CD8-positive, alpha-beta T cell (primary cell): ENCODE measurements at regions of chr1 and their contacts with region 1.

Region 1: DNA sequence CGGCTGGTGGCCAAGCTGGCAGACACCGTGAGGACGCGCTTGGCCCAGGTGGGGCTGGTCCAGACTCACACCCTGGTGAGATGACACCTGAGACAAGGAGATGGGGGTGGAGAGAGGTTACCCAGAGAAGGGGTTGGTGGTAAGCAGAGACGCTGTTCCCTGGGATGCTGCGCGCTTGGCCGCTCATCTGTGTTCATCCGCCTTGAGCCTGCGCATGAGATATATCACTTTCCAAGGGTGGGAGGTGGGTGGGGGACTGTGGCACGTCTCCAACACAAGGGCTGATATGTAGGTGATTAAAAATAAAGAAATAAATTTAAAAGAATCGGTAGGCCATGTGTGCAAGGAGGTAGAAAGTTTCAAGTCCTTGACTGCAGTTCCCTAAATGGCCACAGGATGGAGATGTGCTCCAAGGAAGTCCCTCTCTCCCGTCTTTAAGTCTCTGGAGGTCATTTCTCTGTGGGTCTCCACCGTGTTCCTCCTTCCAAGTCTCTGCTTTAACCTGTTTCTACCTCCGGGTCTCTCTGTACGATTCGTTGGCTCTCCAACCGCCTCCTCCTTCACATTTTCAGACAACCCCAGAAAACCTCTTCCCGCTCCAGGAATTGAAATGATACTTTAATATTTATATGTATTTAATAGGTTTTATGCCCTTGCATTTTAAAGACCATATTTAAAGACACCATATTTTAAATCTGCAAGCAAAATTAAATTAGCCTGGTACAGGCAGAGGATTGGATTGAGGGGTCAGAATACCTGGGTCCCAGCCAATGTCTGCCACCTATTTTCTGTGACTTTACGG is 4.5 kb downstream of the TTC24 start:
- DNase-seq: peak; percentile 52 to 89 (median 78)
- ATAC-seq: peak; percentile 53
- H3K4me3 ChIP-seq: peak overlapping the region in 1 of 2 experiments; percentile 8
- H3K4me3 Mint-ChIP-seq: peak overlapping the region; percentile 61
- H3K27ac ChIP-seq: peak overlapping the region in 1 of 2 experiments; percentile 85
- H3K27ac Mint-ChIP-seq: peak overlapping the region; percentile 81
- H3K4me1 ChIP-seq: peaks cover 28% of the 10 kb centered on the region
- H3K4me1 Mint-ChIP-seq: peaks cover 38% of the 10 kb centered on the region
- H3K27me3 ChIP-seq: no peaks in the 10 kb centered on the region
- H3K27me3 Mint-ChIP-seq: no peaks in the 10 kb centered on the region
- CTCF ChIP-seq: peak; percentile 80

Region 2: GRCh38 chr1:155893389-155894142 is 690.5 kb before region 1 on chr1:
- CTCF ChIA-PET with region 1: no interaction called
- POLR2A ChIA-PET with region 1: no interaction called
- intact Hi-C with region 1: no loop called
- DNase-seq: peak in 5 of 9 experiments; percentile 16 to 69 (median 35)
- ATAC-seq: peak; percentile 95
- H3K4me3 ChIP-seq: no peak overlapping the region
- H3K4me3 Mint-ChIP-seq: no peak overlapping the region
- H3K27ac ChIP-seq: peak overlapping the region in 1 of 2 experiments; percentile 51
- H3K27ac Mint-ChIP-seq: peak overlapping the region; percentile 86
- H3K4me1 ChIP-seq: peaks cover 13% of the 10 kb centered on the region
- H3K4me1 Mint-ChIP-seq: peaks cover 15% of the 10 kb centered on the region
- H3K27me3 ChIP-seq: no peaks in the 10 kb centered on the region
- H3K27me3 Mint-ChIP-seq: no peaks in the 10 kb centered on the region
- CTCF ChIP-seq: no peak

Region 3: DNA sequence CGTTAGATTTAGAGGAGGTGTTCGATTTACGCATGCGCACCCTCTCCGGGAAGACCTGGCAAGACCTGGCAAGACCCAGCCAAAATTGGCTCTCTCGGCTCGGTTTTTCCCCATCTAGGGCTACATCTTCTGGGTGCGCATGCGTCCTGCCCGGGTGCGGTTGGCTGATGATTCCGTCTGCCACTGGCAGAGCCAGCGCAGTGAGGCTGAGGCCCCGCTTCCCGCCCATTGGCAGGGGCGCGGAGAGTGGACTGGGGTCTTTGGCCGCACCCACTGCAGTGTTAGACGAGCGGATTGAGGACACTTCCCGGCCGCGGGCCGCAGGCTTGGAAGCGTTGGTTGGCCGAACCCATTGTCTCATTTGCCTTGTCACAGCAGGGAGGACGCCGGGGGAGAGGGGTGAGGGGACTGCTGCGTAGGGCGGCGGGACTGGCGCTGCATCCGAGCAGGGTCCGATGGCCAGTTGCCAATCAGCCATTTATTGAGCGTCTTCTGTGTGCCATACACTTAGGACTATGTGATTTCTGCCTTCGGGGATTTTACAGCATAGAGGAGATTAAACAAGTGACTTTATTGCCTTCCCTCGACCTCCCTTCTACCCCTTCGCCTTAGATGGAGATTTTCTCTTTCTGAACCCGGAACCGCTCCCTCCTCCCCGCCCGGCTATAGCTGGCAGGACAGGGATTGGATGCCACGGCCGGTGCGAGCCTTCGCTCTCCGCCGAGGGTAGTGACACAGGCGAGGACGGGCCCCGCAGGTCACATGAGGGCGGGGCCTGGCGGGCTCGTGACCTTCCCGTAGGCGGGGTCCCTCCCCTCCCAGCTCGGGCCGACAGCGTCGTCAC is 127.2 kb before region 1 on chr1:
- CTCF ChIA-PET with region 1: interaction called, 5 read pairs
- POLR2A ChIA-PET with region 1: interaction called, 3 read pairs
- intact Hi-C with region 1: loop called (anchors 1 kb)
- DNase-seq: peak; percentile 92 to 99 (median 96)
- ATAC-seq: peak; percentile 84
- H3K4me3 ChIP-seq: peak overlapping the region; percentile 57 to 62
- H3K4me3 Mint-ChIP-seq: peak overlapping the region; percentile 93
- H3K27ac ChIP-seq: peak overlapping the region; percentile 83 to 89
- H3K27ac Mint-ChIP-seq: peak overlapping the region; percentile 100
- H3K4me1 ChIP-seq: peaks cover 4% of the 10 kb centered on the region
- H3K4me1 Mint-ChIP-seq: peaks cover 17% of the 10 kb centered on the region
- H3K27me3 ChIP-seq: no peaks in the 10 kb centered on the region
- H3K27me3 Mint-ChIP-seq: no peaks in the 10 kb centered on the region
- CTCF ChIP-seq: no peak

Region 4: GRCh38 chr1:156524481-156524869 is 59.5 kb before region 1 on chr1:
- CTCF ChIA-PET with region 1: interaction called, 3 read pairs
- POLR2A ChIA-PET with region 1: interaction called, 10 read pairs
- intact Hi-C with region 1: no loop called
- DNase-seq: peak in 3 of 9 experiments; percentile 49 to 76 (median 59)
- ATAC-seq: peak; percentile 69
- H3K4me3 ChIP-seq: no peak overlapping the region
- H3K4me3 Mint-ChIP-seq: peak overlapping the region; percentile 40
- H3K27ac ChIP-seq: peak overlapping the region in 1 of 2 experiments; percentile 59
- H3K27ac Mint-ChIP-seq: peak overlapping the region; percentile 63
- H3K4me1 ChIP-seq: peaks cover 41% of the 10 kb centered on the region
- H3K4me1 Mint-ChIP-seq: peaks cover 44% of the 10 kb centered on the region
- H3K27me3 ChIP-seq: no peaks in the 10 kb centered on the region
- H3K27me3 Mint-ChIP-seq: no peaks in the 10 kb centered on the region
- CTCF ChIP-seq: no peak

Region 5: DNA sequence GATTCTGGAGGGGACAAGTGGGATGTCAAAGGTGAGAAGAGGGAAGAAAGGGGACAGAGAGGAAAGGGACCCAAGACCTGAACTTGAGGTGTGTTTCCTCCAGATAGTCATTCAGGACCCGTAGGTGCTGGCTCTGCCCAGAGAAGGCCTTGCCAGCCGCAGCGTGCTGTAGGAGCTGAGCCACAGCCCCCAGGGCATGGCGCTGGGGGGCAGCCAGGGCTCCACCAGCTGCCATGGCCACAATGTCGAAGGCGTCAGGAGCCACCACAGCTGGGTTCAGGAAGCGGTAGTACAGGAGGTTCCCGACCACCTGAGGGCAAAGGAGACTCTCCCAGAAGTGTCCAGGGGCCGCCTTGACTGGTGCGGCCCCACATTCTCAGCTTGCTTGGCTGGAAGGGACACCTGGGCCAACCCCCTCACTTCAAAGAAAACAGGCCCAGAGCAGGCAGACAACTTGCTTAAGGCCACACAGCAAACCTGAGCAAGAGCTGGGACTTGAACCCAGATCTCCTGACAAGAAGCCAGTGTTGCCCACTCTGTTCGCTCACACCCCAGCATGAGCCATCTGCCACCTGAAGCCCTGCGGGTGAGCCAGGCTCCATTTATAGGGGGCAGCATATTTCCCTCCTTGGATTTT is 49.5 kb before region 1 on chr1:
- CTCF ChIA-PET with region 1: no interaction called
- POLR2A ChIA-PET with region 1: no interaction called
- intact Hi-C with region 1: no loop called
- DNase-seq: no peak
- ATAC-seq: no peak
- H3K4me3 ChIP-seq: no peak overlapping the region
- H3K4me3 Mint-ChIP-seq: no peak overlapping the region
- H3K27ac ChIP-seq: no peak overlapping the region
- H3K27ac Mint-ChIP-seq: no peak overlapping the region
- H3K4me1 ChIP-seq: no peaks in the 10 kb centered on the region
- H3K4me1 Mint-ChIP-seq: no peaks in the 10 kb centered on the region
- H3K27me3 ChIP-seq: no peaks in the 10 kb centered on the region
- H3K27me3 Mint-ChIP-seq: no peaks in the 10 kb centered on the region
- CTCF ChIP-seq: no peak

Region 6: DNA sequence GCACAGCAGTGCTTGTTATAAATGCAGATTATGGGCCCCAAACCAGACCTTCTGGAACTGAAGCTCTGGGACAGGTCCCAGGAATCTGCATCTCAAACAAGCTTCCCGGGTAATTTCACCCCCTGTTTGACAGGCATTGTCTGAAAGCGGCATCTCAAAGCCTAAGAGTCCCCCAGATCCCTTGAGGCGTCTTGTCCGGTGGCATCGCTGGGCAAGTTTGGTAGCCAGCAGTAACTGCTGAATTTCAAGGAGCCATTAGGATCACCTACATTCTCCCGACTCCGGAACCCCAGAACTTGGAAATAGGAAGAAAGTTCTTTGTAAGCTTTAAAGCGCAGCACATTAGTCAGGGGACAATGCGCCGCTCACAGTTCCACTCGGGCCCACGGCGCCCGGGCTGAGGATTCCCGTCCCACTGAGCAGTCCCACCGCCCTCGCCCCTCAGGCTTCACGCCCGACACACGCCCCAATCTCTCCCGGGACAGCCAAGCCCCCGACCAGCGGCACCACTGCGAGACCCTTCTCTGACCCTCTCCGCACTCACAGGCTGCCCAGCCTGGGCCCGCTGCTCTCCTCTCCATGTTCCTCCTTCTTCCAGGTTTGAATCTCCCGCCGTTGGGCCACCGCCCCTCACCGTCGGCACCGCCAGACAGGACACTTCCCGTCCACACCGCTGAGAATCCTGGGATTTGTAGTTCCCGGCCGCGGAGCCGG is 11.9 kb before region 1 on chr1 and contains the start of gene IQGAP3:
- CTCF ChIA-PET with region 1: interaction called, 4 read pairs
- POLR2A ChIA-PET with region 1: interaction called, 5 read pairs
- intact Hi-C with region 1: loop called in 1 of 2 experiments (anchors 1 kb)
- DNase-seq: peak; percentile 49 to 83 (median 72)
- ATAC-seq: peak; percentile 94
- H3K4me3 ChIP-seq: peak within 1 kb of the TSS; percentile 26 to 39
- H3K4me3 Mint-ChIP-seq: peak within 1 kb of the TSS; percentile 78
- H3K27ac ChIP-seq: no peak within 1 kb of the TSS
- H3K27ac Mint-ChIP-seq: no peak within 1 kb of the TSS
- H3K4me1 ChIP-seq: peaks cover 13% of the 10 kb centered on the region
- H3K4me1 Mint-ChIP-seq: peaks cover 14% of the 10 kb centered on the region
- H3K27me3 ChIP-seq: peaks cover 14 to 17% of the 10 kb centered on the region in 2 experiments
- H3K27me3 Mint-ChIP-seq: peaks cover 34% of the 10 kb centered on the region
- CTCF ChIP-seq: no peak
- total RNA-seq, gene IQGAP3: 0.05 TPM in 1 of 2 experiments, not detected in the other

Region 7: GRCh38 chr1:156601122-156601830 is 17.3 kb after region 1 on chr1 and contains the start of gene GPATCH4:
- CTCF ChIA-PET with region 1: interaction called, 18 read pairs
- POLR2A ChIA-PET with region 1: interaction called, 10 read pairs
- intact Hi-C with region 1: loop called in 1 of 2 experiments (anchors 2 kb)
- DNase-seq: peak in 8 of 9 experiments; percentile 61 to 86 (median 72)
- ATAC-seq: peak; percentile 80
- H3K4me3 ChIP-seq: peak within 1 kb of the TSS; percentile 65 to 70
- H3K4me3 Mint-ChIP-seq: peak within 1 kb of the TSS; percentile 98
- H3K27ac ChIP-seq: peak within 1 kb of the TSS; percentile 57 to 80
- H3K27ac Mint-ChIP-seq: peak within 1 kb of the TSS; percentile 98
- H3K4me1 ChIP-seq: peaks cover 24% of the 10 kb centered on the region
- H3K4me1 Mint-ChIP-seq: peaks cover 34% of the 10 kb centered on the region
- H3K27me3 ChIP-seq: no peaks in the 10 kb centered on the region
- H3K27me3 Mint-ChIP-seq: no peaks in the 10 kb centered on the region
- CTCF ChIP-seq: no peak
- total RNA-seq, gene GPATCH4: 46.4 to 46.7 TPM

Region 8: DNA sequence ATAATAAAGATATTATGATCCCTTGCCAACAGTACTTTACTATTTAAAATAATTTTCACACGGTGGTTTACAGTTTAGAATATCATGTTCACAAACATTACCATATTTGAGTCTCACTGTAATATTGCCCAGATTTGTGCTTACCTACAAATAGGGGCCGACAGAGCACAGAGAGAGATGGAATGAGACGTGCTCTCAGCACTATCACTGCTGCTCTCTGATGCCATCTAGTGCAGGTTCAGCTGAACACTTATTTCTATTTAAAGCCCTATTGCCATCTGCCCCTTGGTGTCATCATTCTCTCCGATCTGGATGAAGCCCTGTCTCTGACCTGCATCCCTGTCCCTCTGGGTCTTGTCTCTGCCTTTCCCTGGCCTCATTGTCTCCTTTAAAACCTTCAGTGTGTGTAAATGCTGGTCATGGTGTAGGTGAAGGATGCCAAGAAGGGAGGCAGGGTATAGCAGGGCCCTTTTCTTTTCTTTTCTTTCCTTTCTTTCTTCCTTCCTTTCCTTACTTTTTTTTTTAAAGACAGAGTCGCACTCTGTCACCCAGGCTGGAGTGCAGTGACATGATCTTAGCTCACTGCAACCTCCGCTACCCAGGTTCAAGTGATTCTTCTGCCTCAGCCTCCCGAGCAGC is 24.1 kb after region 1 on chr1:
- CTCF ChIA-PET with region 1: interaction called, 58 read pairs
- POLR2A ChIA-PET with region 1: interaction called, 4 read pairs
- intact Hi-C with region 1: loop called (anchors 1 kb)
- DNase-seq: peak; percentile 37 to 89 (median 65)
- ATAC-seq: peak; percentile 95
- H3K4me3 ChIP-seq: no peak overlapping the region
- H3K4me3 Mint-ChIP-seq: no peak overlapping the region
- H3K27ac ChIP-seq: no peak overlapping the region
- H3K27ac Mint-ChIP-seq: no peak overlapping the region
- H3K4me1 ChIP-seq: peaks cover 8% of the 10 kb centered on the region
- H3K4me1 Mint-ChIP-seq: peaks cover 11% of the 10 kb centered on the region
- H3K27me3 ChIP-seq: peaks cover 0 to 2% of the 10 kb centered on the region in 2 experiments
- H3K27me3 Mint-ChIP-seq: peaks cover 9% of the 10 kb centered on the region
- CTCF ChIP-seq: peak; percentile 88

Region 9: GRCh38 chr1:156641761-156642264 is 57.8 kb after region 1 on chr1 and contains the start of gene BCAN:
- CTCF ChIA-PET with region 1: no interaction called
- POLR2A ChIA-PET with region 1: no interaction called
- intact Hi-C with region 1: no loop called
- DNase-seq: peak in 4 of 9 experiments; percentile 24 to 43 (median 36)
- ATAC-seq: peak; percentile 29
- H3K4me3 ChIP-seq: peak within 1 kb of the TSS in 1 of 2 experiments; percentile 15
- H3K4me3 Mint-ChIP-seq: peak within 1 kb of the TSS; percentile 73
- H3K27ac ChIP-seq: no peak within 1 kb of the TSS
- H3K27ac Mint-ChIP-seq: no peak within 1 kb of the TSS
- H3K4me1 ChIP-seq: peaks cover 31% of the 10 kb centered on the region
- H3K4me1 Mint-ChIP-seq: peaks cover 32% of the 10 kb centered on the region
- H3K27me3 ChIP-seq: peaks cover 35 to 47% of the 10 kb centered on the region in 2 experiments
- H3K27me3 Mint-ChIP-seq: peaks cover 77% of the 10 kb centered on the region
- CTCF ChIP-seq: no peak
- total RNA-seq, gene BCAN: not detected

Region 10: DNA sequence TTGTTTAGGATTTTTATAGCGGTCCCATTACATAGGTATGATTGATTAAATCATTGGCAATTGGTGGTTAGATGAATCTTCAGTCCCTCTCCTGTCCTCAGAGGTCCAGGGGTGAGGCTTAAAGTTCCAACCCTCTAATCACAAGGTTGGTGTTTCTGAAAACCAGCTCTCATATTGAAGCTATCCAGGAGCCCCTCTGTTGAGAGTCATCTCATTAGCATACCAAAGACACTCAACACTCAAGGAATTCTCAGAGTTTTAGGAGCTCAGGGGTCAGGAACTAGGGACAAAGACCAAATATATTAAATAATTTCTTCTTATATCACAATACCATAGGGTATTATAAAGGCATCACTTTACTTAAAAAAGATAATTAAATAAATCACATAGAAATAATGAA is 1169.6 kb after region 1 on chr1:
- CTCF ChIA-PET with region 1: no interaction called
- POLR2A ChIA-PET with region 1: no interaction called
- intact Hi-C with region 1: no loop called
- DNase-seq: no peak
- ATAC-seq: no peak
- H3K4me3 ChIP-seq: no peak overlapping the region
- H3K4me3 Mint-ChIP-seq: no peak overlapping the region
- H3K27ac ChIP-seq: no peak overlapping the region
- H3K27ac Mint-ChIP-seq: no peak overlapping the region
- H3K4me1 ChIP-seq: no peaks in the 10 kb centered on the region
- H3K4me1 Mint-ChIP-seq: peaks cover 2% of the 10 kb centered on the region
- H3K27me3 ChIP-seq: no peaks in the 10 kb centered on the region
- H3K27me3 Mint-ChIP-seq: peaks cover 3% of the 10 kb centered on the region
- CTCF ChIP-seq: no peak